Naive thymus-derived CD4-positive, alpha-beta T cell (primary cell): ENCODE measurements at regions of chr13 and their contacts with region 1.

Region 1: GRCh38 chr13:25286969-25287961 is at the start of gene MTMR6:
- DNase-seq: peak; percentile 90 to 98 (median 93)
- ATAC-seq: peak; percentile 96
- H3K4me3 ChIP-seq: peak within 1 kb of the TSS; percentile 85
- H3K4me3 Mint-ChIP-seq: peak within 1 kb of the TSS; percentile 94 to 100 (median 96)
- H3K27ac ChIP-seq: peak within 1 kb of the TSS; percentile 100
- H3K27ac Mint-ChIP-seq: peak within 1 kb of the TSS; percentile 92 to 99 (median 97)
- H3K4me1 ChIP-seq: peaks cover 12 to 24% of the 10 kb centered on the region in 2 donors
- H3K4me1 Mint-ChIP-seq: peaks cover 23 to 58% (median 50%) of the 10 kb centered on the region in 7 donors
- H3K27me3 ChIP-seq: peaks cover 0 to 3% of the 10 kb centered on the region in 2 donors
- H3K27me3 Mint-ChIP-seq: peaks cover 0 to 17% (median 10%) of the 10 kb centered on the region in 5 donors
- total RNA-seq, gene MTMR6: 16.0 to 23.2 (median 18.5) TPM

Region 2: GRCh38 chr13:24097064-24097463 is 1190.2 kb before region 1 on chr13:
- CTCF ChIA-PET with region 1: no interaction called
- POLR2A ChIA-PET with region 1: no interaction called
- intact Hi-C with region 1: no loop called
- DNase-seq: peak in 1 of 9 donors; percentile 53
- ATAC-seq: no peak
- H3K4me3 ChIP-seq: no peak overlapping the region
- H3K4me3 Mint-ChIP-seq: peak overlapping the region in 7 of 10 donors; percentile 13 to 78 (median 60)
- H3K27ac ChIP-seq: no peak overlapping the region
- H3K27ac Mint-ChIP-seq: peak overlapping the region in 3 of 9 donors; percentile 41 to 73 (median 71)
- H3K4me1 ChIP-seq: peaks cover 0 to 10% of the 10 kb centered on the region in 2 donors
- H3K4me1 Mint-ChIP-seq: peaks cover 10 to 22% (median 18%) of the 10 kb centered on the region in 7 donors
- H3K27me3 ChIP-seq: no peaks in the 10 kb centered on the region
- H3K27me3 Mint-ChIP-seq: peaks cover 0 to 27% (median 0%) of the 10 kb centered on the region in 5 donors

Region 3: DNA sequence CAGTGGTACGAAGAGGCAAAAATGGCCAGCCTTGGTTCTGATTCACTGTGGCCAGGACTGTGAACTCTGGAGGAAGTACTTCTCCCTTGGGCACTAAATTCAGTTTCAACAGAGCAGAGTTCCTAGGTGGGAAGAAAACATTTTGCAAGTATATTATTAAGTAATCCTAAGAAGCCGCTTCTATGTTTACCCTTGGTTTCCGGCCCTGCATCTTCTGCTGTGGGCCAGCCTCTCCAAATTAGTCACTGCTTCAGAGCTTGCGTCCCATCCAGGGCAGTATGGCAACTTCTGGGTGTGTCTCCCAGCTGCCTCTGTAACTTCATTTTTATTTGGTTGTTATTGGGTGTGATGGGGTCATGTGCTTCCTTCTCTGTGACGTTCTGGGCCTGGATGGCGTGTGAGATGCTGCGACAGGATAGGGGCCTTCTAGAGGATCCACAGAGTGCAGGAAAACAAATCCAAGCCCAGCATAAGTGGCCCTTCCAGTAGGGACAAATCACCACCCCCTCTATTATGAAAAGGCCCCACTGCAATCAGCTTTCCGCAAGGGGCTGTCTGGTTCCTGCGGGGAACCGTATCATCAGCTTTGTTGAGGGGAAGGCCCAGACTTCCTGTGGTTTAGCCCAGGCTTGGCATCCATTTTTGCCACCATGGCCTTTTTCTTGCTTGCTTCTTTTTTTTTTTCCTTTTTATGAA is 1033.0 kb before region 1 on chr13:
- CTCF ChIA-PET with region 1: no interaction called
- POLR2A ChIA-PET with region 1: no interaction called
- intact Hi-C with region 1: loop called in 1 of 2 experiments (anchors 5 kb)
- DNase-seq: peak in 7 of 9 donors; percentile 59 to 80 (median 68)
- ATAC-seq: peak; percentile 76
- H3K4me3 ChIP-seq: peak overlapping the region; percentile 82
- H3K4me3 Mint-ChIP-seq: peak overlapping the region; percentile 86 to 96 (median 92)
- H3K27ac ChIP-seq: peak overlapping the region; percentile 90
- H3K27ac Mint-ChIP-seq: peak overlapping the region; percentile 86 to 99 (median 95)
- H3K4me1 ChIP-seq: peaks cover 58 to 75% of the 10 kb centered on the region in 2 donors
- H3K4me1 Mint-ChIP-seq: peaks cover 44 to 96% (median 91%) of the 10 kb centered on the region in 7 donors
- H3K27me3 ChIP-seq: no peaks in the 10 kb centered on the region
- H3K27me3 Mint-ChIP-seq: no peaks in the 10 kb centered on the region

Region 4: GRCh38 chr13:24922745-24923591 is 364.3 kb before region 1 on chr13:
- CTCF ChIA-PET with region 1: no interaction called
- POLR2A ChIA-PET with region 1: no interaction called
- intact Hi-C with region 1: loop called (anchors 2 to 5 kb)
- DNase-seq: peak; percentile 79 to 93 (median 87)
- ATAC-seq: peak; percentile 100
- H3K4me3 ChIP-seq: peak overlapping the region; percentile 78
- H3K4me3 Mint-ChIP-seq: peak overlapping the region; percentile 89 to 100 (median 98)
- H3K27ac ChIP-seq: peak overlapping the region; percentile 71
- H3K27ac Mint-ChIP-seq: peak overlapping the region; percentile 73 to 95 (median 91)
- H3K4me1 ChIP-seq: no peaks in the 10 kb centered on the region
- H3K4me1 Mint-ChIP-seq: peaks cover 0 to 22% (median 14%) of the 10 kb centered on the region in 7 donors
- H3K27me3 ChIP-seq: no peaks in the 10 kb centered on the region
- H3K27me3 Mint-ChIP-seq: peaks cover 0 to 12% (median 0%) of the 10 kb centered on the region in 5 donors

Region 5: DNA sequence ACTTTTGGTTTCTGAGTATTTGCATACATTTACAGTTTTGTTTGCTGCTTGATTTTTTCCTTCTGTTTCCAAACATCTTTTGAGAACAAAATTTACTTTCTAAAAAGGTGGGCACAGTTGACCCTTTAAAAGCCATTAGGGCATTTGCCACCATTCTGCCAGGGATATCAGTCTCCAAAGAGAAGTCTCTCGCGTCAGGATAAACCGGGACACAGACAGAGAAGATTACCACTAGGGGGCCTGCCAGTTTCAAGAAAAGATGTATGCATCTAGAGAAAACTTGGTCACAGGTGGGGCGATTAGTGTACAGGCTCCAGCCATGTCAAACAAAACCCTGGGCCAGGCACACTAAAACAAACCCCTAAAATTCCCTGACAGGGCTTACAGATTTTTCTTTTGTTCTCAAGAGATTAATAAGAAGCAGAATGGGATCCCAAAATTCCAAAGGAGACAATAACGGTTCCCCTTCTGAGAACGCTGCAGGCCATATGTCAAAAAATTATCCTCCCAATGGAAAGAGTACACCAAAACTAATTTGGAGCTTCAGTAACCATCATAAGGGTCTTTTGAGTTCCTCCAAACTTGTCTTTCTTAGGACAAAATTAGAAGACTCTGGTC is 202.0 kb before region 1 on chr13:
- CTCF ChIA-PET with region 1: no interaction called
- POLR2A ChIA-PET with region 1: no interaction called
- intact Hi-C with region 1: loop called in 1 of 2 experiments (anchors 5 kb)
- DNase-seq: peak in 1 of 9 donors; percentile 1
- ATAC-seq: no peak
- H3K4me3 ChIP-seq: no peak overlapping the region
- H3K4me3 Mint-ChIP-seq: no peak overlapping the region
- H3K27ac ChIP-seq: no peak overlapping the region
- H3K27ac Mint-ChIP-seq: no peak overlapping the region
- H3K4me1 ChIP-seq: no peaks in the 10 kb centered on the region
- H3K4me1 Mint-ChIP-seq: no peaks in the 10 kb centered on the region
- H3K27me3 ChIP-seq: no peaks in the 10 kb centered on the region
- H3K27me3 Mint-ChIP-seq: peaks cover 12 to 19% (median 18%) of the 10 kb centered on the region in 5 donors

Region 6: GRCh38 chr13:25132751-25133390 is 154.4 kb before region 1 on chr13:
- CTCF ChIA-PET with region 1: no interaction called
- POLR2A ChIA-PET with region 1: no interaction called
- intact Hi-C with region 1: no loop called
- DNase-seq: no peak
- ATAC-seq: no peak
- H3K4me3 ChIP-seq: no peak overlapping the region
- H3K4me3 Mint-ChIP-seq: no peak overlapping the region
- H3K27ac ChIP-seq: no peak overlapping the region
- H3K27ac Mint-ChIP-seq: no peak overlapping the region
- H3K4me1 ChIP-seq: no peaks in the 10 kb centered on the region
- H3K4me1 Mint-ChIP-seq: peaks cover 0 to 5% (median 0%) of the 10 kb centered on the region in 7 donors
- H3K27me3 ChIP-seq: no peaks in the 10 kb centered on the region
- H3K27me3 Mint-ChIP-seq: peaks cover 34 to 61% (median 38%) of the 10 kb centered on the region in 5 donors

Region 7: GRCh38 chr13:25225970-25226369 is 61.3 kb before region 1 on chr13:
- CTCF ChIA-PET with region 1: no interaction called
- POLR2A ChIA-PET with region 1: no interaction called
- intact Hi-C with region 1: no loop called
- DNase-seq: no peak
- ATAC-seq: no peak
- H3K4me3 ChIP-seq: no peak overlapping the region
- H3K4me3 Mint-ChIP-seq: no peak overlapping the region
- H3K27ac ChIP-seq: no peak overlapping the region
- H3K27ac Mint-ChIP-seq: no peak overlapping the region
- H3K4me1 ChIP-seq: no peaks in the 10 kb centered on the region
- H3K4me1 Mint-ChIP-seq: no peaks in the 10 kb centered on the region
- H3K27me3 ChIP-seq: no peaks in the 10 kb centered on the region
- H3K27me3 Mint-ChIP-seq: peaks cover 15 to 47% (median 29%) of the 10 kb centered on the region in 5 donors

Region 8: GRCh38 chr13:25267715-25268114 is 19.6 kb before region 1 on chr13:
- CTCF ChIA-PET with region 1: interaction called, 4 read pairs
- POLR2A ChIA-PET with region 1: interaction called, 3 read pairs
- intact Hi-C with region 1: loop called (anchors 1 kb)
- DNase-seq: peak in 4 of 9 donors; percentile 11 to 36 (median 23)
- ATAC-seq: peak; percentile 80
- H3K4me3 ChIP-seq: no peak overlapping the region
- H3K4me3 Mint-ChIP-seq: no peak overlapping the region
- H3K27ac ChIP-seq: no peak overlapping the region
- H3K27ac Mint-ChIP-seq: peak overlapping the region in 6 of 9 donors; percentile 1 to 73 (median 28)
- H3K4me1 ChIP-seq: no peaks in the 10 kb centered on the region
- H3K4me1 Mint-ChIP-seq: peaks cover 0 to 28% (median 11%) of the 10 kb centered on the region in 7 donors
- H3K27me3 ChIP-seq: no peaks in the 10 kb centered on the region
- H3K27me3 Mint-ChIP-seq: no peaks in the 10 kb centered on the region

Region 9: GRCh38 chr13:25847145-25847544 is 559.9 kb after region 1 on chr13:
- CTCF ChIA-PET with region 1: no interaction called
- POLR2A ChIA-PET with region 1: no interaction called
- intact Hi-C with region 1: loop called in 1 of 2 experiments (anchors 2 kb)
- DNase-seq: peak in 7 of 9 donors; percentile 17 to 65 (median 47)
- ATAC-seq: peak; percentile 75
- H3K4me3 ChIP-seq: peak overlapping the region; percentile 38
- H3K4me3 Mint-ChIP-seq: peak overlapping the region; percentile 26 to 75 (median 66)
- H3K27ac ChIP-seq: peak overlapping the region; percentile 39
- H3K27ac Mint-ChIP-seq: peak overlapping the region; percentile 6 to 91 (median 72)
- H3K4me1 ChIP-seq: peaks cover 13 to 23% of the 10 kb centered on the region in 2 donors
- H3K4me1 Mint-ChIP-seq: peaks cover 21 to 48% (median 38%) of the 10 kb centered on the region in 7 donors
- H3K27me3 ChIP-seq: no peaks in the 10 kb centered on the region
- H3K27me3 Mint-ChIP-seq: peaks cover 0 to 3% (median 0%) of the 10 kb centered on the region in 5 donors

Region 10: GRCh38 chr13:26221721-26222519 is 934.7 kb after region 1 on chr13 and contains the start of gene RNF6:
- CTCF ChIA-PET with region 1: no interaction called
- POLR2A ChIA-PET with region 1: no interaction called
- intact Hi-C with region 1: loop called in 1 of 2 experiments (anchors 2 kb)
- DNase-seq: peak; percentile 83 to 92 (median 89)
- ATAC-seq: peak; percentile 95
- H3K4me3 ChIP-seq: peak within 1 kb of the TSS; percentile 96
- H3K4me3 Mint-ChIP-seq: peak within 1 kb of the TSS; percentile 95 to 100 (median 100)
- H3K27ac ChIP-seq: peak within 1 kb of the TSS; percentile 97
- H3K27ac Mint-ChIP-seq: peak within 1 kb of the TSS; percentile 93 to 100 (median 100)
- H3K4me1 ChIP-seq: peaks cover 16 to 17% of the 10 kb centered on the region in 2 donors
- H3K4me1 Mint-ChIP-seq: peaks cover 25 to 54% (median 49%) of the 10 kb centered on the region in 7 donors
- H3K27me3 ChIP-seq: no peaks in the 10 kb centered on the region
- H3K27me3 Mint-ChIP-seq: peaks cover 0 to 3% (median 0%) of the 10 kb centered on the region in 5 donors
- total RNA-seq, gene RNF6: 31.0 to 45.6 (median 44.6) TPM